Heart left ventricle (tissue), 16 donors: ENCODE measurements at regions of chr4 and their contacts with region 1.

Region 1: DNA sequence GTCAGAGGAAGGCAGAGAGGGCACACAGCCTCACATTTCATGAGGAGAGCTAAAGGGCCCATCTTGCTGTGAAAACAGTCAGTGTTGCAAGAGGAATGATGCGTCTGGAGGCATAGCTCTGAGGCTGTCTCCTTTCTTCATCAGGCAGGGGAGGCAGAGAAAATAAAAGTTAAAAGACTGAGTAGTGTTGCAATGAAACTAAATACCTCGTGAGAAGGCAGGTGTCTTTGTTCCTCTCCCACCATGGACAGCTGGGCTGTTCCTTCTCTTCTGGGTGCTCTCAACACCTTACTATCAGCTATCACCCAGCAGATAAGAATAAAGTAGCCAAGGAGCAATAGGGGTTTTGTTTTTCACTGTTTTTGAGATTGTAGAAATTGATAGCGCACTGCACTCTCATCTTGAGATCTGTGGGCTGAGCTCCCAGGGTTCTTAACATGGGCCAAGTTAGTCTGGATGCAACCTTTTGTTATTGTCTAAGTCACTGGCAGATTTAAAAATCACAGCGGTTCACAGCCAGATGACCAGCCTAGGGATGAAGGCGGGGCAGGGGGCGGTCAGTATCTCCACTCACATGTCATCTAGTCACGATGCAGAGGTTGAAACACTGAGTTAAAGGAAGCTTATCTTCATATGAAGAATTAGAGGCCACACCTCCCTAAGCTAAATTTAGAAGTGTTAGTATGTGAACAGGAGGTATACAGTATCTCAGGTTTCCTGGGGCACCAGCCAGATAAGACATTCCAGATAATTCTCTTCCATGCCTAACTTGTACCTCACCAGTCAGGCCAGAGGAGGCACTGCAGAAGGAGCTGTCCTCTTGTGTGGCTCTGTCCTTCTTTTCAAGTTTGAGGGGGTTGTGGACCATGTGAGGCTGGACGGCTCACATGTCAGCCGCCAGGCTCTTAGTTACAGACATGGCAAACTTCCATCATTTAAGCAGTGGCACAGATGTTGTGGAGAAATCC is 36.9 kb downstream of the PARM1 start:
- DNase-seq: peak in 4 of 5 donors; percentile 42 to 70 (median 56)
- ATAC-seq: peak; percentile 90 to 94 (median 94)
- H3K4me3 ChIP-seq: no peak overlapping the region
- H3K27ac ChIP-seq: peak overlapping the region; percentile 36 to 89 (median 76)
- H3K4me1 ChIP-seq: peaks cover 0 to 59% (median 20%) of the 10 kb centered on the region in 12 donors
- H3K27me3 ChIP-seq: no peaks in the 10 kb centered on the region
- CTCF ChIP-seq: peak in 10 of 12 donors; percentile 23 to 61 (median 44)
- POLR2A ChIP-seq: no peak

Region 2: GRCh38 chr4:74942918-74943253 is 26.9 kb before region 1 on chr4:
- intact Hi-C with region 1: loop called in 1 of 10 experiments (anchors 1 kb)
- DNase-seq: no peak
- ATAC-seq: no peak
- H3K4me3 ChIP-seq: no peak overlapping the region
- H3K27ac ChIP-seq: no peak overlapping the region
- H3K4me1 ChIP-seq: peaks cover 0 to 51% (median 4%) of the 10 kb centered on the region in 12 donors
- H3K27me3 ChIP-seq: no peaks in the 10 kb centered on the region
- CTCF ChIP-seq: no peak
- POLR2A ChIP-seq: no peak